ENCODE measurements at regions of chr2 and their contacts with region 1.

Region 1: GRCh38 chr2:39913648-39914461 is 134.8 kb upstream of the THUMPD2 start:
- DNase-seq: no peak
- H3K4me3 Mint-ChIP-seq: no peak overlapping the region
- H3K27ac Mint-ChIP-seq: no peak overlapping the region
- H3K4me1 Mint-ChIP-seq: peaks cover 34% of the 10 kb centered on the region
- H3K27me3 Mint-ChIP-seq: peaks cover 15% of the 10 kb centered on the region

Region 2: DNA sequence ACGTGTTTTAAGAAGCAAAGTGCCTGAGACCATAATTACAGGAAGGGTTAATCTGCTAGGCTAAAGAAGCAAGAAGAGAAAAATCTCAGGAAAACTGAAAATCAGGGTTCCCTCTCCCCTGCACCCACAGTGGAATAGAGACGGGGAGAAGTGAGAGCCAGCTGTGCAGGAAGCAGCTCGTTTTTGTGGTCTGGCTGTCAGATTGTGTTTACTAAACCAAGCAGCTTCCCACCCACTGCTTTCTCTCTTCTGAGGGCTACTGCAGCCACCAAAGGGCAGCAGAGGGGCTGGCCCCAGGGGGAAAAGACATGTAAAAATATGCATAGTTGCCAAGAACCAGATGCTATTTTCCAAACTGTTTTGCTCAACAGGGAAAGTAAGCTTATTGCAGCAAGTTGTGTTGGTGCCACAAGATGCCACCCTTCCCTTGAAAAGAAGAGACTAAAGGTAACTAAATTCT is 62.2 kb before region 1 on chr2:
- intact Hi-C with region 1: no loop called
- DNase-seq: no peak
- H3K4me3 Mint-ChIP-seq: no peak overlapping the region
- H3K27ac Mint-ChIP-seq: no peak overlapping the region
- H3K4me1 Mint-ChIP-seq: no peaks in the 10 kb centered on the region
- H3K27me3 Mint-ChIP-seq: peaks cover 20% of the 10 kb centered on the region

Region 3: DNA sequence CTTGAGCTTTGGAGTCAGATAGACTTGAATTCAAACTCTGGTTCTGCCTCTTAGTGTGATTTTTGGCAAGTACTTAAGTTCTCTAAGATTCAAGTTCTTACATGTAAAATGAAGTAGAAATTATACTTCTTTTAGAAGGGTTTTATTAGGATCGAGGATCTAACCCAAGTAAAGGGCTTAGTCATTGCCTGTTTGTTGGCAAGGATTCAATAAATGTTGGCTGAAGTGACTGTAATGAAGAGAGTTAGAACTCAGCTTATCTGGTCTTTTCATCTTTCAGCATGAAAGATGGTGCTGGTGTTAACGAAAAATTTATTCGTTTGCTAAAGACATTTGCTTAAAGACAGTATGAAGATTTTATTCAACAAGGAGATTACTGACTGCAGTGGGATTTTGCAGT is 181.1 kb after region 1 on chr2:
- intact Hi-C with region 1: loop called (anchors 10 kb)
- DNase-seq: no peak
- H3K4me3 Mint-ChIP-seq: no peak overlapping the region
- H3K27ac Mint-ChIP-seq: no peak overlapping the region
- H3K4me1 Mint-ChIP-seq: peaks cover 15% of the 10 kb centered on the region
- H3K27me3 Mint-ChIP-seq: peaks cover 2% of the 10 kb centered on the region

Region 4: GRCh38 chr2:40212804-40213470 is 299.1 kb after region 1 on chr2:
- intact Hi-C with region 1: loop called (anchors 1 kb)
- DNase-seq: no peak
- H3K4me3 Mint-ChIP-seq: no peak overlapping the region
- H3K27ac Mint-ChIP-seq: no peak overlapping the region
- H3K4me1 Mint-ChIP-seq: peaks cover 29% of the 10 kb centered on the region
- H3K27me3 Mint-ChIP-seq: no peaks in the 10 kb centered on the region

Region 5: DNA sequence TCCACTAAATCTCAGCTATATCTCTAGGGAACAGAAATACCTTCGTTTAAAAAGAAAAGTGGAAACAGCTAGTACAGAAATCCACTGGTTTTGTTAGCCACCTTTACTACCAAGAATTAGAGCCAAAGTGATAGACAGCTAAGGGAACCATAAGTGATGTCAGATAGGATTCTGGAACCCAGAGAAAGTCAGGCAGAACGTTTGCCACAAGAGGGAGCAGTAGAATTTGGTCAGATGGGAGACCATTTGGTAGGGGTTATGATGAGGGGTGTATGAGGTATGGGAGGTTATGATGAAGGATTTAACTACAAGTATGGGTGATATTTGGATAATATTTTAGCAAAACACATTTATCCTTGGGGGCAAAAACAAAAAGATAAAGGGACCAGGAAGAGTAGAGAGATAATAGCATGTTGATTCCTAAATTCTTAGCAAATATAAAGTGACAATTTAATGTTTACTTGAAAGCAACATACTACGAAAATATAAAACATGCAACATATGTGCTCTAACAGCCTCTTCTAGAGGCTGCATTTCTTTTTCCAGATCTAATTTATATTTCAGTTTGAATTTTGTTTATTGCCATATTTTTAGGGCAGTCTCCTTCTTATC is 534.7 kb after region 1 on chr2:
- intact Hi-C with region 1: loop called (anchors 2 kb)
- DNase-seq: no peak
- H3K4me3 Mint-ChIP-seq: no peak overlapping the region
- H3K27ac Mint-ChIP-seq: no peak overlapping the region
- H3K4me1 Mint-ChIP-seq: peaks cover 25% of the 10 kb centered on the region
- H3K27me3 Mint-ChIP-seq: peaks cover 38% of the 10 kb centered on the region

Region 6: GRCh38 chr2:40554668-40555285 is 640.9 kb after region 1 on chr2:
- intact Hi-C with region 1: loop called (anchors 1 kb)
- DNase-seq: peak; percentile 37
- H3K4me3 Mint-ChIP-seq: no peak overlapping the region
- H3K27ac Mint-ChIP-seq: no peak overlapping the region
- H3K4me1 Mint-ChIP-seq: peaks cover 2% of the 10 kb centered on the region
- H3K27me3 Mint-ChIP-seq: peaks cover 7% of the 10 kb centered on the region

Region 7: GRCh38 chr2:40760071-40760666 is 846.3 kb after region 1 on chr2:
- intact Hi-C with region 1: loop called (anchors 10 kb)
- DNase-seq: no peak
- H3K4me3 Mint-ChIP-seq: no peak overlapping the region
- H3K27ac Mint-ChIP-seq: no peak overlapping the region
- H3K4me1 Mint-ChIP-seq: peaks cover 3% of the 10 kb centered on the region
- H3K27me3 Mint-ChIP-seq: no peaks in the 10 kb centered on the region

Region 8: GRCh38 chr2:41782306-41783158 is 1868.7 kb after region 1 on chr2:
- intact Hi-C with region 1: loop called (anchors 5 kb)
- DNase-seq: no peak
- H3K4me3 Mint-ChIP-seq: no peak overlapping the region
- H3K27ac Mint-ChIP-seq: no peak overlapping the region
- H3K4me1 Mint-ChIP-seq: no peaks in the 10 kb centered on the region
- H3K27me3 Mint-ChIP-seq: peaks cover 2% of the 10 kb centered on the region